ENCODE measurements at regions of chr9 and their contacts with region 1.

Region 1: DNA sequence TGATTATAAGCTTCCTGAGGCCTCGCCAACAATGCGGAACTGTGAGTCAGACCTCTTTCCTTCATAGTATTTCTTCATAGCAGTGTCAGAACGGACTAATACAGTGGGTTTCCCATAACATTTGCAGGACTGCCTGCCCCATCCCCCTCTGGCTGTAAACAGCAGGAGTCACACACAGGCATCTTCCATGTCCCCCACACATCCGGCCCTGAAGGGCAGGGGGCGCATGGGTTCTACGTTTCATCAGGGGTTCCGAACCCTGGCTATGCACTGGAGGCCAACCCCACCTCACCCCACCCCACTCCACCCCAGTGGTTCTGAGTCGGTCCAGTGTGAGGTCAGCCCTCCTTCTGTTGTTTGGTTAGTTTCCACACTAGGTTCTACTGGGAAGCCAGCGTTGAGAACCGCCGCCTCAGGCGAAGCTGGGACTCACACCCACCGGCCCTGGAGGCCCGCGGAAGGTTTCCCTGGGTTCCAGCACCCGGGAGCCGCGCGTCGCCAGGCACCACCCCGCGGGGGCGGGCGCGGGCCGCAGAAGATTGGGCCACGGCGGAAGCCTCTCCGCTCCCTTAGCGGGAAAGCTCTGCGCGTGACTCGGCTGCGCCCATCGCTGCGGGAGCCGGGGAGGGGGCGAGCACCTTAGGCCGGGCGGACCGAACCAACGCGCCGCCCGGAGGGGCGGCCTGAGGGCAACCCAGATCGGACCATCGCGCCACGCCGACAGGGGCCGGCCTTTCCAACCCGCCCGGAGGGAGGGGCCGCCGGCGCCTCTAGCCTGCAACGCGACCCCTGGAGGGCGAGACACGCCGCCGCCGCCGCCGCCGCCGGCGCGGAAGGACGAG is at the start of gene RUSC2:
- ATAC-seq: peak; percentile 70 to 91 (median 90)
- H3K4me3 ChIP-seq: peak within 1 kb of the TSS; percentile 42 to 82 (median 45)
- H3K27ac ChIP-seq: peak within 1 kb of the TSS; percentile 54 to 71
- H3K4me1 ChIP-seq: peaks cover 0 to 8% of the 10 kb centered on the region in 2 donors
- total RNA-seq, gene RUSC2: 12.7 to 42.1 (median 34.3) TPM

Region 2: DNA sequence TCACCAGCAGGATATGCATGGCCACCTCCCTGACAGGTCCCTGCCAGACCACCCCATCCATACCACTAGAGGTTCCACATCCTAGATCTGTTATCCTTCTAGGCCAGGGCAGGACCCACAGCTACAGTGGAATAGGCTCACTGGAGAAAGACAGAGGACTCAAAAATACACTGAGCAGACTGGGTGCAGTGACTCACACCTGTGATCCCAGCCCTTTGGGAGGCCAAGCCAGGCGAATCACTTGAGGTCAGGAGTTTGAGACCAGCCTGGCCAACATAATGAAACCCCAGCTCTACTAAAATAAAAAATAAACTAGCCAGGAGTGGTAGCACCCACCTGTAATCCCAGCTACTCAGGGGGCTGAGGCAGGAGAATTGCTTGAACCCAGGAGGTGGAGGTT is 59.0 kb after region 1 on chr9:
- in situ Hi-C with region 1: loop called in 1 of 9 experiments (anchors 5 kb)
- ATAC-seq: no peak
- H3K4me3 ChIP-seq: no peak overlapping the region
- H3K27ac ChIP-seq: no peak overlapping the region
- H3K4me1 ChIP-seq: peaks cover 1 to 9% of the 10 kb centered on the region in 2 donors

Region 3: GRCh38 chr9:35814841-35815543 is 325.5 kb after region 1 on chr9 and contains the start of gene HINT2:
- in situ Hi-C with region 1: no loop called
- ATAC-seq: peak; percentile 83 to 90 (median 86)
- H3K4me3 ChIP-seq: peak within 1 kb of the TSS; percentile 57 to 94 (median 80)
- H3K27ac ChIP-seq: peak within 1 kb of the TSS; percentile 87 to 95
- H3K4me1 ChIP-seq: peaks cover 13 to 14% of the 10 kb centered on the region in 2 donors
- total RNA-seq, gene HINT2: 30.5 to 62.8 (median 42.9) TPM

Measured in motor neuron (in vitro differentiated cells).